ENCODE measurements at regions of chrX and their contacts with region 1.

Region 1: GRCh38 chrX:65985922-65986588 is 53.8 kb downstream of the VSIG4 start:
- DNase-seq: peak; percentile 50 to 85 (median 64)
- ATAC-seq: peak; percentile 93
- H3K4me3 ChIP-seq: no peak overlapping the region
- H3K27ac ChIP-seq: peak overlapping the region; percentile 71
- H3K4me1 ChIP-seq: peaks cover 5 to 50% of the 10 kb centered on the region in 2 experiments; a peak in 4 of 5 replicates
- H3K27me3 ChIP-seq: no peaks in the 10 kb centered on the region
- CTCF ChIP-seq: peak; percentile 64 to 73 (median 66)
- EP300 ChIP-seq: no peak
- POLR2A ChIP-seq: no peak
- RAD21 ChIP-seq: peak; percentile 78 to 86

Region 2: DNA sequence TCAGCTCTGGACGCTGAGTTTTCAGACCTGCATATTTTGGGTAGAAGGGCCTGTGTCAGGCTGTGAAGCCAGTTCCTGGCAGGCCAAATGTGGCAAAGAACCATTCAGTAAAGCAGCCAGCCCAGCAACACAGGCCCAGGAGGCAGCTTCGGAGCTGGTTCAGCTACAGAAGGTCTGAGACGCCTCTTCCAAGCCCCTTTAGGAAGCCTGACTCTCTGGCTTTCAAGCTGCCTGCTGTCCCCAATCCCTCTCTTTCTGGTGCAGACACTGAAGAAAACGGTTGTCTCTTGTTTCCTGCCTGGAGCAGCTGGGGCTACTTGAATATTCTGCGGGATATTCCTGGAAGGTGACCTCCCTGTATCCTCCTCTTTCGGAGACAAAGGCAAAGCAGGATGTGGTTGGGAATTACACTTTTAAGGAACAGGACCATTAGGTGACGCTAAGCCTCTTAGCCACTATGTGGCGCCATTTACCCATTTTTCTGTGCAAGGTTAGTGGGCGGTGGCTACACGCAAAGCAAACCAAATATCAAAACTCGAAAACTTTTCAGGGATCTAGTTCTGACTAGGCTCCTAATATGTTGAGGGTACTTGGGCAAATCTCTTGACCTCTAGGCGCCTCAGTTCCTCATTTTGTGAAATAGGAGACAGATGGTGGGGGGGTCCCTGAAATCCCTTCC is 404.3 kb before region 1 on chrX:
- CTCF ChIA-PET with region 1: no interaction called
- POLR2A ChIA-PET with region 1: no interaction called
- in situ Hi-C with region 1: loop called (anchors 5 kb)
- intact Hi-C with region 1: loop called (anchors 1 kb)
- DNase-seq: peak; percentile 53 to 80 (median 60)
- ATAC-seq: peak; percentile 93
- H3K4me3 ChIP-seq: no peak overlapping the region
- H3K27ac ChIP-seq: peak overlapping the region; percentile 62; the same call in 2 of the 3 replicates
- H3K4me1 ChIP-seq: peaks cover 4 to 12% of the 10 kb centered on the region in 2 experiments; a peak in 4 of 5 replicates
- H3K27me3 ChIP-seq: no peaks in the 10 kb centered on the region
- CTCF ChIP-seq: peak; percentile 74 to 90 (median 77)
- EP300 ChIP-seq: no peak
- POLR2A ChIP-seq: no peak
- RAD21 ChIP-seq: peak; percentile 86 to 89

Region 3: GRCh38 chrX:65731684-65732289 is 254.3 kb before region 1 on chrX:
- CTCF ChIA-PET with region 1: no interaction called
- POLR2A ChIA-PET with region 1: no interaction called
- in situ Hi-C with region 1: loop called (anchors 10 kb)
- intact Hi-C with region 1: no loop called
- DNase-seq: no peak
- ATAC-seq: no peak
- H3K4me3 ChIP-seq: no peak overlapping the region
- H3K27ac ChIP-seq: no peak overlapping the region
- H3K4me1 ChIP-seq: no peaks in the 10 kb centered on the region
- H3K27me3 ChIP-seq: no peaks in the 10 kb centered on the region
- CTCF ChIP-seq: no peak
- EP300 ChIP-seq: no peak
- POLR2A ChIP-seq: no peak
- RAD21 ChIP-seq: no peak

Region 4: DNA sequence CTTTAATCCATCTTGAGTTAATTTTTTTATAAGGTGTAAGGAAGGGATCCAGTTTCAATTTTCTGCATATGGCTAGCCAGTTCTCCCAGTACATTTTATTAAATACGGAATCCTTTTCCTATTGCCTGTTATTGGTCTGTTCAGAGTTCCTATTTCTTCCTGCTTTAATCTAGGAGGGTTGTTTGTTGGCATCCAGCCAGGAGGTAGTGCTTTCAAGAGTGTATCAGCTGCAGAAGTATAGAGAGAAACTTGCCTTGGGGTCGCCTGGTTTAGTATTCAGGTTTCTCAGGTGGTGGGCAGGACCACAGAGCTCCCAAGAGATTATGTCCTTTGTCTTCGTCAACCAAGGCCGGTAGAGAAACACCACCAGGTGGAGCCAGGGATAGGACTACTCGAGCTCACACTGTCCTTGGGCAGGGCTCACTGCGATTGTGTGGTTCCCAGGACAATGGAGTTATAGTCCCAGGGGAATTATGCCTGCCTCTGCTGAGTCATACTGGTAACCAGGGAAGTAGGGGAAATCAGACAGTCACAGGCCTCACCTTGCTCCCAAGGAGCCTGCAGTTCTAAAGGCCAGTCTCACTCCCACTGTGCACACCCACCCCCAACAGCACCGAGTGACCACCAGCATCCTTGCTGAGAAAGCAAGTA is 114.3 kb before region 1 on chrX:
- CTCF ChIA-PET with region 1: no interaction called
- POLR2A ChIA-PET with region 1: no interaction called
- in situ Hi-C with region 1: no loop called
- intact Hi-C with region 1: loop called (anchors 1 kb)
- DNase-seq: peak; percentile 24 to 68 (median 44)
- ATAC-seq: peak; percentile 83
- H3K4me3 ChIP-seq: no peak overlapping the region
- H3K27ac ChIP-seq: no peak overlapping the region
- H3K4me1 ChIP-seq: peaks cover 27 to 30% of the 10 kb centered on the region in 2 experiments; a peak in 4 of 5 replicates
- H3K27me3 ChIP-seq: no peaks in the 10 kb centered on the region
- CTCF ChIP-seq: peak; percentile 45 to 57 (median 54); a peak in 5 of 6 replicates
- EP300 ChIP-seq: no peak
- POLR2A ChIP-seq: no peak
- RAD21 ChIP-seq: peak; percentile 40 to 70

Region 5: GRCh38 chrX:66022632-66023384 is 36.8 kb after region 1 on chrX:
- CTCF ChIA-PET with region 1: no interaction called
- POLR2A ChIA-PET with region 1: interaction called, 4 read pairs
- in situ Hi-C with region 1: no loop called
- intact Hi-C with region 1: loop called (anchors 2 kb)
- DNase-seq: peak; percentile 45 to 73 (median 52)
- ATAC-seq: peak; percentile 62
- H3K4me3 ChIP-seq: no peak overlapping the region
- H3K27ac ChIP-seq: peak overlapping the region; percentile 52
- H3K4me1 ChIP-seq: peaks cover 13 to 54% of the 10 kb centered on the region in 2 experiments
- H3K27me3 ChIP-seq: no peaks in the 10 kb centered on the region
- CTCF ChIP-seq: peak; percentile 65 to 78 (median 72); a peak in 5 of 6 replicates
- EP300 ChIP-seq: peak; percentile 11; the same call in 1 of the 2 replicates
- POLR2A ChIP-seq: peak; percentile 57
- RAD21 ChIP-seq: peak; percentile 63 to 75

Region 6: GRCh38 chrX:66064261-66064660 is 78.2 kb after region 1 on chrX:
- CTCF ChIA-PET with region 1: no interaction called
- POLR2A ChIA-PET with region 1: no interaction called
- in situ Hi-C with region 1: no loop called
- intact Hi-C with region 1: no loop called
- DNase-seq: peak in 2 of 4 experiments; percentile 25 to 55
- ATAC-seq: peak; percentile 96
- H3K4me3 ChIP-seq: no peak overlapping the region
- H3K27ac ChIP-seq: peak overlapping the region; percentile 66; the same call in 2 of the 3 replicates
- H3K4me1 ChIP-seq: peaks cover 4 to 8% of the 10 kb centered on the region in 2 experiments; a peak in 3 of 5 replicates
- H3K27me3 ChIP-seq: no peaks in the 10 kb centered on the region
- CTCF ChIP-seq: no peak
- EP300 ChIP-seq: no peak
- POLR2A ChIP-seq: no peak
- RAD21 ChIP-seq: no peak